ENCODE measurements at regions of chr19 and their contacts with region 1.

Region 1: DNA sequence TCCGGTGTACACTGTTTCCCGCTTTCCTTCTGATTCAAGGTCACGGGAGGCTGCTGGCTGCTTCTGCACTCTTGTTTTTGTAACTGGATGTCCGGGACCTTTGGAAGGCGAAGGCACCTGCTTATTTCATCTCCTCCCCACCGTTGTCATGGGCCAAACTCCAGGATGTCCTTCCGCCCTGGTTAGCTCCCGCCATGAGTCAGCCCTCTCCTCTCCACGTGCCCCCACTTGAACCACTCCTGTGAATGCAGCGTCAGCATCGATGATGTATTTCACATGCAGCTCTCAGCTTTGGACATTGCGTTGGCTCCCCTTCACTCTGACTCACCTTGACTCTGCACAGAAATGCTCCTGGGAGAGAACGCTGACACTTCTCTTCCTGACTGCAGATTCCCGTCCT is 5.5 kb upstream of the GALP start:
- DNase-seq: peak; percentile 70
- H3K27ac ChIP-seq: no peak overlapping the region
- CTCF ChIP-seq: no peak

Region 2: DNA sequence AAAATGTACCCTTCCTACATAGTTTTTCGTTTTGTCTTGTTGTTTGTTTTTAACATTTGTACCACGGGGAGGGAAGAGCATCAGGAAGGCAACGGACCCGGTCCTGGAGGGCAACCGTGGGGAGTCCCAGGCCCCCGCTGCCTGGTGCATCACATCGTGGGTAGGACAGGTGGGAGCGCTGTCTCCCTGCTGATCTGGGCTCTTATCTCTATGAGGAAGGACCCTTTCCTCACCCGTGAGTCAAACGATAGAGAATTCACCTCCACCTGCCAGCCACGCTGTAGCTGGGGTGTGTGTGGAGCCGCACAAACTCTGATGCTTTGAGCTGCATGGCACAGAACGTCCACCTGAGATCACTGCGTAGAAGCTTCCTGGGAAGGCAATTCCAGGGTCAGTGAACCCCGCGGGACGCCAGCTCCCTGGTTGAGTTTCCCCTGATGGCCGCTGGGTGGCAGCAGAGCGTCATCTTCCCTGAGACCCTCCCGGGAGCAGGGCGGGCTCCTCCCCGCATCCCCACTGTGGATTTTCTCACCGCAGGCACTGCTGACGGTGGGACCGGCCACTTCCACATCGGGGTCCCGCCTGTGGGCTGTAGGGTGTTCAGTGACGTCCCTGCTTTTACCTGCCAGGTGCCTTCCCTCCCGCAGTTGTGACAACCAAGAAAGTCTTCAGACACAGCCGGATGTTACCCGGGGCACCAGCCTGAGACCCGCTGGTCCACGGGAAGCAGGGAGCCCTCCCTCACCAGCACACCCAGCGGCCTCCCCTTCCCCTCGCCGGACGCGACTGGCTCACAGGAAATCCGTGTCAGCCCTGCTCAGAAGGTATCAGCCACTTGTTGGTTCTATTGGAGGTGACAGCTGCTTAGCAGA is 103.9 kb before region 1 on chr19:
- CTCF ChIA-PET with region 1: interaction called, 8 read pairs
- POLR2A ChIA-PET with region 1: interaction called, 14 read pairs
- DNase-seq: peak; percentile 74
- H3K27ac ChIP-seq: no peak overlapping the region
- CTCF ChIP-seq: peak; percentile 86

Region 3: DNA sequence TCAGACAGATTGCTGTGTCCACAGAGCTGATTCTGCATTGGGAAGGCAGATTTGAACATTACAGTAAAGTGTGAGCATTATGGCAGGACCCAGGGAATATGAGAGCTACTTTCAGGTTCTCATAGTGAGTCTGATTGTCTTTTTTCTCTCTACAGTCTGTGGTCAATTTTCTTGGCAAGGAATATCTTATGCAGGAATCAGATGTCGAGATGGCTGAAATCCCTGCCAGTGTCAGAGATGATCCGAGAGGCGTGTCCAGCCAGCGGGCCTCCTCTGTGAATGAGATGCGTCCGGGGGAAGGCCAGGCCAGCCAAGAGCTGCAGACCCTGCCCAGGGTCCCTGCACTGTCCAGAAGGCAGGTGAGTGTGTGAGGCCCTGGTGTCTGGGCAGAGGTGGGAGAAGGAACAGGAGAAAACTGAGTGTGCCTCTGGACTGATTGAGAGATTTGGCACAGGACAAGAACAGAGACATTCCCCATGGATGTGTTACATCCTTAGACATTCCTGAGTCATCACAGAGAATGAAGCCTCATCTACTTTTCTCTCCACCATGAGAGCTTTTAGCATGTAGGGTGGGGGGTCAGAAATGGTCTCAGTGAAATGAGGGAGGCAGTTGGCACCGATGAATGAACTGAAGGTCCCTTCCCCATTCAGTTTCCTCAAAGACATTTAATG is 74.9 kb after region 1 on chr19:
- CTCF ChIA-PET with region 1: no interaction called
- POLR2A ChIA-PET with region 1: no interaction called
- DNase-seq: no peak
- H3K27ac ChIP-seq: no peak overlapping the region
- CTCF ChIP-seq: no peak

Measured in RWPE1 (cell line).